ENCODE measurements at regions of chr16 and their contacts with region 1.

Region 1: DNA sequence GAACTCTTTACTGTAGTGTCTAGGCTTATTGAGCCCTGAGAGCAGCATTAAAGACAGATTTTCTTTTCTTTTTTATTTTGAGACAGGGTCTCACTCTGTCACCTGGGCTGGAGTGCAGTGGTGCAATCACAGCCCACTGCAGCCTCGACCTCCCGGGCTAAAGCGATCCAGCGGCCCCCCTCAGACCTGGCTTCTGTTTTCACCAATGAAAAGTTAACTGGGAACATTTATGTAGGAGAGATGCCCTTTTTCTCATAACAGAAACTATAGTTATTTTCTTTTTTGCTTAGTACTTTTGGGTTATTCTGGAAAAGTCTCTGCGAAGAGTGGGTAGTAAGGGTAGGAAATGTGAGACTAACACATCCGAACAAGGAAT is 1.5 kb downstream of the MAP1LC3B start:
- DNase-seq: no peak
- H3K4me3 ChIP-seq: peak overlapping the region; percentile 68 to 90 (median 84)
- H3K27ac ChIP-seq: peak overlapping the region; percentile 87
- H3K4me1 ChIP-seq: peaks cover 28% of the 10 kb centered on the region
- H3K27me3 ChIP-seq: no peaks in the 10 kb centered on the region
- CTCF ChIP-seq: no peak

Region 2: DNA sequence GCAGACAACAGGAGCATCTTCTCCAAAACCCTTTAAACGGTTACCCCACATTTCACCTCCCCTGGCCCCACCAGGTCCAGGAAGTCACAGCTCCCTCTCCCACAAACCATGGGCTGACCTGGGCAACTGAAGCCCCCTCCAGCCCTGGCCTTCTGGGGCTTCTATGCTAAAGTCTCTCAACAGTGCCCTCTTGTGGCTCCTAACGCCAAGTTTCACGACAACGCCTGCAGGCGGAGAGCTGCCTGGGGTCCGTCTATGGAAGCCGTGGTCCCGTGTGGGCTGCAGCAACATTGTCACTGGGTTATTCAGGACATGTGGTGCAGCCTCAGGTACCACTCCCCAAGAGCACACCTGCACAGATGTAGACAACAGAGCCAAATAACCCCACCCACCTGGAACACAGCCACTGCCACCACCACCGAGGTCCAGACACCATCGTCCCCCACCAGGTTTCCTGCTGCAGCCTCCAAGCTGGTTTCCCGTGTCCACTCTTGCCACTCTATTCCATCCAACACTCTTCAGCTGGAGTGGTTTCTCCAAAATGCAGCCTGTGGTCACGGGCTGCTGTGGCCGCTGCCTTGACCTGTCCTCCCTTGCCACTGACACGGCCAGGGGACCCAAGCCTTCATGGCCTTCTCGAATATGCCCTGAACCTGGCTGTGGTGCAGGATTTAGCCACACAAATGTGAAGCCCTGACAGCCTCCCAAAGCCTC is 95.6 kb before region 1 on chr16:
- CTCF ChIA-PET with region 1: no interaction called
- dilution Hi-C with region 1: no loop called
- in situ Hi-C with region 1: no loop called
- intact Hi-C with region 1: no loop called
- DNase-seq: no peak
- H3K4me3 ChIP-seq: no peak overlapping the region
- H3K27ac ChIP-seq: no peak overlapping the region
- H3K4me1 ChIP-seq: no peaks in the 10 kb centered on the region
- H3K27me3 ChIP-seq: no peaks in the 10 kb centered on the region
- CTCF ChIP-seq: peak; percentile 49 to 52

Region 3: DNA sequence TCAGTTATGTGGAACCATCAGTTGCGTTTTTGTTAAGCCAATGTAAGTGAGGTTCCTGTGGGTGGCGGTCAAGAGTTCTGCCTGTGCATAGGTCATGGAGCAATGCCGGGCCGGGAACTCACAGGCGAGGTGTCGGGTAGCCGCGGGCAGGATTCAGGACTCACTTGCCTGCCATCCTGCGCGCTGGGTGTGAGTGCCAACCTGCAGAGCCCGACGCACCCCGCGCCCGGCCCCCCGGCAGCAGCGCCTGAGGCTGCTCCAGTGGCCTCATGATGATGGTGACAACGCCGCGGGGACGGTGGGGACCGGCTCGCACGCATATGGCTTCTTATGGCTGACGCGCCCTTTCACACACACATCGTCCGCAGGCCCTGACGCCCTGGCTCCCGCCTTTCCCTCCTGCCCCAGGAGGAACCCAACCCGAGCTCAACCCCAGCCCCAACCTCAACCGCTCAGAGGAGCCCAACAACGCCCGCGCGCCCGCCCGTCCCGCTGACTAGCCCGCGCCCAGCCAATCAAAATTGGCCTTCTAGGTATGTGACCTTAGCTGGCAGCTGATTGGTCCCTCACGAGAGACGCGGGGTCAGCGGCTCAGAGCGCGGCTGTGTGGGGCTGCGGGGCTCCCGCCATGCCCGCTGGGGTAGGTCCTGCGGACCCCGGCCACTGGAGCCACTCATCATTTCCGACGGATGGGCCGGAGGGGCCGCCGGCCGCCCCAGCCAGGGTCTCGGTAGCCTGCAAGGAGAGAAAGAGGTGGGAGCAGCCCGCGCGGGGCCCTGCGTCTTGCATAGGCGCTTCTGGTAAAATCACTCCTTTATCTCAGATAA is 76.5 kb before region 1 on chr16 and contains the start of gene C16orf95:
- CTCF ChIA-PET with region 1: no interaction called
- dilution Hi-C with region 1: no loop called
- in situ Hi-C with region 1: no loop called
- intact Hi-C with region 1: loop called (anchors 1 kb)
- DNase-seq: peak; percentile 92
- H3K4me3 ChIP-seq: peak within 1 kb of the TSS; percentile 91 to 92 (median 92)
- H3K27ac ChIP-seq: peak within 1 kb of the TSS; percentile 92
- H3K4me1 ChIP-seq: peaks cover 16% of the 10 kb centered on the region
- H3K27me3 ChIP-seq: no peaks in the 10 kb centered on the region
- CTCF ChIP-seq: peak; percentile 57 to 74
- total RNA-seq, gene C16orf95: 3.5 to 5.9 TPM

Measured in mammary epithelial cell (primary cell).